A673 (cell line): ENCODE measurements at regions of chr15 and their contacts with region 1.

Region 1: DNA sequence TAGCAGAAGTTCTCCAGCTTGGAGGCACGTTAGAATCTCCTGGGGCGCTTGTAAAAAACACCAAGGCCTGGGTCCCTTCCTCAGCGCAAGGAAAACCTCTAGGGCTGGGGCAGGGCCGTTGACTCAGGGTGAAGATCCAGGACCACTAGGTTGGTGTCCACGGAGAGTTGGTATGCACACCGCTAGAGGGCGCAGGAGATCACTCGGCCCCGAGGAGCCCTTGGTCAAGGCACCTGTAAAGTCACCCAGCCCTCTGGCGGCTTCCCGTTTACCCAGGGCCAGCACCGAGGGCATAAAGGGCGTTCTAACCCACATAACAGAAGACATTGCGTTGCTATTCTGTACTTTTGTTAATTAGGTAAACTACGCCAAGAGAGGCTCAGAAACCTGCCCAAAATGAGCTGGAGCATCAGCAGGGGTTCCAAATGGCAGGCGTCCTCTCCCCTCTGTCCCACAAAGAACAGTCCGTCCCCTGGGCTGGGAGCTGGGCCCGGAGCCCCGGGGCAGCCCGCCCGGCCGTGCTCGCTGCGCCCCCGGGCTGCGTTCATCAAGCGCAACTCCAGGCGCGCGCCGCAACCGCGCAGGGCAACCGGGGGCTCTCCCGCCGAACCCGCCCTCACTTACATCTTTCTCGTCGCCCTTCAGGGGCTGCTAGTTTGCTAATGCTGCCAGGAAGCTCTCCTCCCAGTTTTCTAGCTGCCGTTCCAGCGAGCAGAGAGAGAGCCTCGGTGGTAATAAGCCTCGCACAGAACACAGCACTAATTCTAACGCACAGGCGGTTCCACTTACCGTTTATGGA is 332.1 kb downstream of the ARRDC4 start:
- DNase-seq: peak; percentile 44
- H3K4me3 ChIP-seq: peak overlapping the region; percentile 33
- H3K27ac ChIP-seq: no peak overlapping the region
- H3K4me1 ChIP-seq: peaks cover 13% of the 10 kb centered on the region
- H3K27me3 ChIP-seq: peaks cover 30% of the 10 kb centered on the region
- CTCF ChIP-seq: peak; percentile 88

Region 2: GRCh38 chr15:97903971-97904572 is 388.6 kb before region 1 on chr15:
- CTCF ChIA-PET with region 1: interaction called, 6 read pairs
- POLR2A ChIA-PET with region 1: no interaction called
- intact Hi-C with region 1: loop called (anchors 2 kb)
- DNase-seq: peak; percentile 83
- H3K4me3 ChIP-seq: no peak overlapping the region
- H3K27ac ChIP-seq: no peak overlapping the region
- H3K4me1 ChIP-seq: peaks cover 2% of the 10 kb centered on the region
- H3K27me3 ChIP-seq: peaks cover 8% of the 10 kb centered on the region
- CTCF ChIP-seq: peak; percentile 88

Region 3: GRCh38 chr15:98043160-98044014 is 249.3 kb before region 1 on chr15:
- CTCF ChIA-PET with region 1: no interaction called
- POLR2A ChIA-PET with region 1: no interaction called
- intact Hi-C with region 1: no loop called
- DNase-seq: no peak
- H3K4me3 ChIP-seq: no peak overlapping the region
- H3K27ac ChIP-seq: no peak overlapping the region
- H3K4me1 ChIP-seq: no peaks in the 10 kb centered on the region
- H3K27me3 ChIP-seq: peaks cover 10% of the 10 kb centered on the region
- CTCF ChIP-seq: no peak

Region 4: GRCh38 chr15:98311566-98312188 is 19.0 kb after region 1 on chr15:
- CTCF ChIA-PET with region 1: no interaction called
- POLR2A ChIA-PET with region 1: no interaction called
- intact Hi-C with region 1: no loop called
- DNase-seq: peak; percentile 83
- H3K4me3 ChIP-seq: no peak overlapping the region
- H3K27ac ChIP-seq: no peak overlapping the region
- H3K4me1 ChIP-seq: no peaks in the 10 kb centered on the region
- H3K27me3 ChIP-seq: peaks cover 5% of the 10 kb centered on the region
- CTCF ChIP-seq: peak; percentile 87

Region 5: DNA sequence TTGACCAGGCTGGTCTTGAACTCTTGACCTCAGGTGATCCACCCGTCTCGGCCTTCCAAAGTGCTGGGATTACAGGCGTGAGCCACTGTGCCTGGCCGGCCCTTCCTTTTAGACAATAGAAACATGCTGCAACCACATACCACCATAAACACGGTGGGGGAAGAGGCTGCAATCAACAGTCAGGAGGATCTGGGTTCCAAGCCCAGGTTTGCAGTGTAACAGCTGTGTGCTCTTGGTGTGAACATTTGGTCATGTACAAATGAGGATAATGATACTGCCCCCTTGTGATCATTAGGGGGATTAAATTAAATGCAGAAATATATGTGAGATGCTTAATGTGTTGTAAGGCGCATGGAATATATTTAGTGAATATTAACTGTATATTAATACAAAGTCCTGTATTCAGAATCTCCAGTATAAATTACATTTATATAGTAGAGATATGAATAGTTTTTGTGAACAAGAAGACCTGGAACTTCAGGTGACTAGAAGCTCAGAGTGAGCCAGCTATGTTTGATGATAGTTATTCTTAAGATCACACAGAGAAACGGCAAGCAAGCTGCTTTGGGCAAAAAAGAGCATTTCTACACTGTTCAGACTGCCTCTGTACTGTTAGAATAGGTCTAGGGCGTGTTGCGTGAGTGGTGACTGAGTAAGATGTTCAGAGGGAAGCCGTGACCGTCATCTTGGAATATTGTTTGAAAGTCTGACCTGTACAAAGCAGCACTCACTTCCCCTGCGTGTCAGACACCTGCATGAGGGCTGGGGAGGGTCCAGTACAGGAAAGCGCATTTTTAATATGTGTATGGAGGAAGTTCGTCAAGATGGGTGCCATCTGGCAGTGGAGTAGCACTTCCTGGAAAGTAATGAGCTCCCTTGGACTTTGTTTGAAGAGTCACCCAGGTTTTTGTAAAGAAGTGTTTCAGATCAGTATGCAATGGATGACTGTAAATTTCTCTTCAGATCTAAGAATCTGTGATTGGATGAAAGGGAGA is 589.2 kb after region 1 on chr15:
- CTCF ChIA-PET with region 1: no interaction called
- POLR2A ChIA-PET with region 1: no interaction called
- intact Hi-C with region 1: no loop called
- DNase-seq: peak; percentile 85
- H3K4me3 ChIP-seq: no peak overlapping the region
- H3K27ac ChIP-seq: no peak overlapping the region
- H3K4me1 ChIP-seq: peaks cover 4% of the 10 kb centered on the region
- H3K27me3 ChIP-seq: no peaks in the 10 kb centered on the region
- CTCF ChIP-seq: peak; percentile 71